CD4-positive, alpha-beta T cell (primary cell): ENCODE measurements at regions of chr2 and their contacts with region 1.

Region 1: DNA sequence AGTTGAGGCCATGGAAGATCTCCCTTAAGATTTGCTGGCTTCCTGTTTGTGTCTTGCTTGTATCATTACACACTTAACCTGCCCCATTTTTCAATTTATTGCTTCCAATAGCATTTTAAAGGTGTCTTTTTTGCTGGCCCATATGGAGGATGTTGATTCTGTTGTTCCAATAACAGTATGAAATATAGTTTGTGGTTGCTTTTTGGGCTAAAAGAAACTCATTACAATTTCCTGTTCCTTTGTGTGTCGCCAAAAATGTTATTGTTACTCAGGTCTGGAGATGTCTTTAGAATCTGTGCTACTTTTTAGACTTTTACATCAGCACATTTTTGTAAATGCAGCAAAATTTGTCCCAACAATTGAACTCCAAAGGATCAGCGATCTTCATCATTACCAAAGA is 234.0 kb upstream of the ITGA4 start:
- DNase-seq: peak in 3 of 14 experiments; percentile 20 to 74 (median 26)
- ATAC-seq: peak; percentile 68
- H3K4me3 ChIP-seq: no peak overlapping the region
- H3K4me3 Mint-ChIP-seq: peak overlapping the region; percentile 49
- H3K27ac ChIP-seq: peak overlapping the region; percentile 36 to 50
- H3K27ac Mint-ChIP-seq: peak overlapping the region; percentile 96
- H3K4me1 ChIP-seq: no peaks in the 10 kb centered on the region
- H3K4me1 Mint-ChIP-seq: peaks cover 51% of the 10 kb centered on the region
- H3K27me3 ChIP-seq: no peaks in the 10 kb centered on the region
- H3K27me3 Mint-ChIP-seq: no peaks in the 10 kb centered on the region
- CTCF ChIP-seq: no peak

Region 2: DNA sequence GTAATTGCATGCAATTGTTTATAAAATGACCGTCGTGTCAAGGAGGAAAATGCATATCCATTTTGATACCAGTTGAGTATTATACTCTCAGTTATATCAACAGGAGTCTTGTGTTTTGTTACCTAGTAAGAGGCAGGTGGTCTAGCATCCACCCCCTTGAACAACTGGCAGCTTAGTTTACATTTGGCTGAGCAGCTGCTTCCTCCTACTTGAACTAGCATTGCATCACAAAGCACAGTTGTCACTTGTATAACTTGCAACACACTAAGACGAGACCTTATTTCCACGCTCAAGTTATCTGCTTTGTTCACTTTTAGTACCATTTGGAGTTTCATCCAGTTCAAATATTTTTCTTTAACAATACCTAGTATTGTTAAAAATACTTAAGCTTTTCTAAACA is 318.2 kb before region 1 on chr2:
- CTCF ChIA-PET with region 1: no interaction called
- POLR2A ChIA-PET with region 1: no interaction called
- intact Hi-C with region 1: no loop called
- DNase-seq: no peak
- ATAC-seq: no peak
- H3K4me3 ChIP-seq: no peak overlapping the region
- H3K4me3 Mint-ChIP-seq: no peak overlapping the region
- H3K27ac ChIP-seq: no peak overlapping the region
- H3K27ac Mint-ChIP-seq: no peak overlapping the region
- H3K4me1 ChIP-seq: no peaks in the 10 kb centered on the region
- H3K4me1 Mint-ChIP-seq: no peaks in the 10 kb centered on the region
- H3K27me3 ChIP-seq: peaks cover 0 to 7% of the 10 kb centered on the region in 2 experiments
- H3K27me3 Mint-ChIP-seq: peaks cover 31% of the 10 kb centered on the region
- CTCF ChIP-seq: no peak

Region 3: GRCh38 chr2:180980106-180980942 is 242.9 kb before region 1 on chr2 and contains the start of gene UBE2E3:
- CTCF ChIA-PET with region 1: no interaction called
- POLR2A ChIA-PET with region 1: no interaction called
- intact Hi-C with region 1: no loop called
- DNase-seq: peak; percentile 62 to 90 (median 70)
- ATAC-seq: peak; percentile 77
- H3K4me3 ChIP-seq: peak within 1 kb of the TSS; percentile 77
- H3K4me3 Mint-ChIP-seq: peak within 1 kb of the TSS; percentile 94
- H3K27ac ChIP-seq: peak within 1 kb of the TSS in 1 of 2 donors; percentile 20
- H3K27ac Mint-ChIP-seq: peak within 1 kb of the TSS; percentile 92
- H3K4me1 ChIP-seq: peaks cover 17% of the 10 kb centered on the region
- H3K4me1 Mint-ChIP-seq: peaks cover 49% of the 10 kb centered on the region
- H3K27me3 ChIP-seq: no peaks in the 10 kb centered on the region
- H3K27me3 Mint-ChIP-seq: no peaks in the 10 kb centered on the region
- CTCF ChIP-seq: peak; percentile 39
- total RNA-seq, gene UBE2E3: 20.5 TPM

Region 4: GRCh38 chr2:181117206-181117925 is 105.9 kb before region 1 on chr2:
- CTCF ChIA-PET with region 1: no interaction called
- POLR2A ChIA-PET with region 1: no interaction called
- intact Hi-C with region 1: loop called in 1 of 2 experiments (anchors 5 kb)
- DNase-seq: no peak
- ATAC-seq: no peak
- H3K4me3 ChIP-seq: no peak overlapping the region
- H3K4me3 Mint-ChIP-seq: no peak overlapping the region
- H3K27ac ChIP-seq: no peak overlapping the region
- H3K27ac Mint-ChIP-seq: no peak overlapping the region
- H3K4me1 ChIP-seq: peaks cover 3% of the 10 kb centered on the region
- H3K4me1 Mint-ChIP-seq: peaks cover 23% of the 10 kb centered on the region
- H3K27me3 ChIP-seq: no peaks in the 10 kb centered on the region
- H3K27me3 Mint-ChIP-seq: no peaks in the 10 kb centered on the region
- CTCF ChIP-seq: no peak

Region 5: GRCh38 chr2:181275643-181276070 is 52.4 kb after region 1 on chr2:
- CTCF ChIA-PET with region 1: no interaction called
- POLR2A ChIA-PET with region 1: no interaction called
- intact Hi-C with region 1: loop called in 1 of 2 experiments (anchors 10 kb)
- DNase-seq: peak in 7 of 14 experiments; percentile 5 to 66 (median 41)
- ATAC-seq: peak; percentile 91
- H3K4me3 ChIP-seq: no peak overlapping the region
- H3K4me3 Mint-ChIP-seq: peak overlapping the region; percentile 40
- H3K27ac ChIP-seq: peak overlapping the region; percentile 8 to 44
- H3K27ac Mint-ChIP-seq: peak overlapping the region; percentile 76
- H3K4me1 ChIP-seq: peaks cover 7% of the 10 kb centered on the region
- H3K4me1 Mint-ChIP-seq: peaks cover 53% of the 10 kb centered on the region
- H3K27me3 ChIP-seq: no peaks in the 10 kb centered on the region
- H3K27me3 Mint-ChIP-seq: no peaks in the 10 kb centered on the region
- CTCF ChIP-seq: no peak

Region 6: DNA sequence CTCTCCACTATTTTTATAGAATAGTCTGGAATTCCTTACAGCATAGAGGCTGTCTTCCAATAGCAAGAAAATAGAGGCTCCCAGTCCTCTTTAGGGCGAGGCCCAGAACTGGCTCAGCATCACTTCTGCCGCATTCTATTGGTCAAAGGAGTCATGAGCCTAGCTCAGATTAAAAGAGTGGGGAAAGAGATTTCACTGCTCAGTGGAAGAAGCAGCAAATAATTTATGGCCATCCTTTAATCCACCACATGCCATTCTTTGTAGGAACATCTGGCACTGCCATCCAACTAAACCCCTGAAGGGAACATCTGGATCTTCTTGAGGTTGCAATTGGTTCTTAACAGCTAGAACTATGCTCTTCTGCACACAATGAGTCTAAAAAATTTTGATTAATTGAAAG is 500.5 kb after region 1 on chr2:
- CTCF ChIA-PET with region 1: no interaction called
- POLR2A ChIA-PET with region 1: no interaction called
- intact Hi-C with region 1: no loop called
- DNase-seq: no peak
- ATAC-seq: no peak
- H3K4me3 ChIP-seq: no peak overlapping the region
- H3K4me3 Mint-ChIP-seq: no peak overlapping the region
- H3K27ac ChIP-seq: no peak overlapping the region
- H3K27ac Mint-ChIP-seq: no peak overlapping the region
- H3K4me1 ChIP-seq: no peaks in the 10 kb centered on the region
- H3K4me1 Mint-ChIP-seq: no peaks in the 10 kb centered on the region
- H3K27me3 ChIP-seq: peaks cover 0 to 14% of the 10 kb centered on the region in 2 experiments
- H3K27me3 Mint-ChIP-seq: peaks cover 30% of the 10 kb centered on the region
- CTCF ChIP-seq: no peak